Caco-2 (cell line): ENCODE measurements at regions of chr12 and their contacts with region 1.

Region 1: DNA sequence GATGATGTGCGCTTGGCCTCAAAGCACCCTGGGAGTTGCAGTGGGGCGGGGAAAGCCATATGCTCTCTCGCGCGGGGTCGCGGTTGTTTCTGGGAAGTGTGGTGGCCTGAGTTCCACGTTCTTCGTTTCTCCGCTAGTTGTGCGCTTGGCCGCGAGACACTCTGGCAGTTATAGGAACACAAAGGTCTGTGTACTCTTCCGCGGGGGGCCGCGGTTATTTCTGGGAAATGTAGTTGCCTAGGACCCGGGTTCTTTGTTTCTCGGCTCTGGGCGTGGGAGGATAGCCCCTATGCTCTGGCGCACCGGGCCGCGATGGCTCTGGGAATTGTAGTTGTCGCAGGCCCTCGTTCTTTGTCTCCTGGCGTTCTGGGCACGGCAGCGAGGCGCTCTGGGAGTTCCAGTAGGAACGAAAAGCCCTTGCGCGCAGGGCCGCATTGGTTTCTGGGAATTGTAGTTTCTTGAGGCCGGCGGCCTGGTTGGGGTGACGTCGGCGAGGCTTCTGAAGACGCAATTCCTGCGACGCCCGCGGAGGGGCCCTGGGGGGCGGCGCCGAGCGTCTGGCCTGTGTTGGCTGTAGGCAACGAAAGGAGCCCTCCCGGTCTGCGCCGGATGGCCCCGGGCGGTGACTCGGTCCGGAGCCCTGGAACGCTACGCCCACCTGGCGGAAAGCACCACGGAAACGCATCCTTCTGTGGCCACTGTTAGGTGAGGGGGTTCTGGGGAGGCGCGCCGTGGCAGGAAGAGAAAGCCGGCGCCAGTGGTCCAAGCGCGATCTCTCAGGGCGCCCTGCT is at the start of gene ZNF140:
- DNase-seq: peak; percentile 97
- H3K4me3 ChIP-seq: peak within 1 kb of the TSS; percentile 72
- H3K4me3 Mint-ChIP-seq: no peak within 1 kb of the TSS
- H3K27ac Mint-ChIP-seq: no peak within 1 kb of the TSS
- H3K4me1 ChIP-seq: no peaks in the 10 kb centered on the region
- H3K4me1 Mint-ChIP-seq: no peaks in the 10 kb centered on the region
- H3K27me3 ChIP-seq: no peaks in the 10 kb centered on the region
- H3K27me3 Mint-ChIP-seq: no peaks in the 10 kb centered on the region
- CTCF ChIP-seq: peak in 1 of 2 experiments; percentile 16
- total RNA-seq, gene ZNF140: 12.1 and 12.5 TPM in 2 replicates

Region 2: DNA sequence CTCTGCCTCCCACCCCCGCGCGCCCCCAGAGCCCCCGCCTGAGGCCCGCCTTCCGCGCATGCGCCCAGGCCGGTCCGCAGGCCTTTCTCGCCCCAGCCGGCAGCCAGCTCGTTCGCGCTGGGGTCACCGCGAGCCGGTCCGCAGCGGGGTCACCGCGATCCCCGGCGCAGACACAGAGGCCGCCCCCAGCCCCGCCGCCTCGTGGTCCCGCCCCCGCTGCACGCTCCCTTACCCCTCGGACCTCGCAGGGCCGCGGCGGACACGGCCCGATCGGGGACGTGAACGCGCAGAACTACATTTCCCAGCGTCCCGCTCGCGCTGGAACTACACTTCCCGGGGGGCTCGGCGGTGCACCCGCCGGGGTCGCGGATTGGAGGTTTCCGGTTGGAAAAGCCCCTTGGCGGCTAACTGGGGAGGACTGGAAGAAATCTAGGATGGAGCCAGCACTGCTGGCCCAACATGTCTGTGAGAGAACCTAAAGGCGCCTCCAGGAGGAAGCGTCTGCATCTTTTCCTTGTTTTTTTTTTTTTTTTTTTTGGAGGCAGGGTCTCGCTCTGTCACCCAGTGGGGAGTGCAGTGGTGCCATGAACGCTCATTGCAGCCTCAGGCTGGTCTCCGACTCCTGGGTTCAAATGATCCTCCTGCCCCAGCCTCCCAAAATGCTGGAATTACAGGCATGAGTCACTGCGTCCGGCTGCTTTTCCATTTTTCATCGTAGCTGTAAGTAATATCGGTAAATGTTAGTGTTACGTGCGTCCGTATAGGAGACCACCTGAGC is 124.4 kb before region 1 on chr12 and contains the start of gene ZNF605:
- CTCF ChIA-PET with region 1: no interaction called
- POLR2A ChIA-PET with region 1: interaction called, 6 read pairs
- intact Hi-C with region 1: loop called (anchors 2 kb)
- DNase-seq: peak; percentile 89 to 90
- H3K4me3 ChIP-seq: peak within 1 kb of the TSS; percentile 49
- H3K4me3 Mint-ChIP-seq: peak within 1 kb of the TSS; percentile 83
- H3K27ac Mint-ChIP-seq: peak within 1 kb of the TSS; percentile 83
- H3K4me1 ChIP-seq: no peaks in the 10 kb centered on the region
- H3K4me1 Mint-ChIP-seq: peaks cover 11% of the 10 kb centered on the region
- H3K27me3 ChIP-seq: no peaks in the 10 kb centered on the region
- H3K27me3 Mint-ChIP-seq: no peaks in the 10 kb centered on the region
- CTCF ChIP-seq: peak in 1 of 2 experiments; percentile 11
- total RNA-seq, gene ZNF605: 7.1 and 7.5 TPM in 2 replicates

Region 3: DNA sequence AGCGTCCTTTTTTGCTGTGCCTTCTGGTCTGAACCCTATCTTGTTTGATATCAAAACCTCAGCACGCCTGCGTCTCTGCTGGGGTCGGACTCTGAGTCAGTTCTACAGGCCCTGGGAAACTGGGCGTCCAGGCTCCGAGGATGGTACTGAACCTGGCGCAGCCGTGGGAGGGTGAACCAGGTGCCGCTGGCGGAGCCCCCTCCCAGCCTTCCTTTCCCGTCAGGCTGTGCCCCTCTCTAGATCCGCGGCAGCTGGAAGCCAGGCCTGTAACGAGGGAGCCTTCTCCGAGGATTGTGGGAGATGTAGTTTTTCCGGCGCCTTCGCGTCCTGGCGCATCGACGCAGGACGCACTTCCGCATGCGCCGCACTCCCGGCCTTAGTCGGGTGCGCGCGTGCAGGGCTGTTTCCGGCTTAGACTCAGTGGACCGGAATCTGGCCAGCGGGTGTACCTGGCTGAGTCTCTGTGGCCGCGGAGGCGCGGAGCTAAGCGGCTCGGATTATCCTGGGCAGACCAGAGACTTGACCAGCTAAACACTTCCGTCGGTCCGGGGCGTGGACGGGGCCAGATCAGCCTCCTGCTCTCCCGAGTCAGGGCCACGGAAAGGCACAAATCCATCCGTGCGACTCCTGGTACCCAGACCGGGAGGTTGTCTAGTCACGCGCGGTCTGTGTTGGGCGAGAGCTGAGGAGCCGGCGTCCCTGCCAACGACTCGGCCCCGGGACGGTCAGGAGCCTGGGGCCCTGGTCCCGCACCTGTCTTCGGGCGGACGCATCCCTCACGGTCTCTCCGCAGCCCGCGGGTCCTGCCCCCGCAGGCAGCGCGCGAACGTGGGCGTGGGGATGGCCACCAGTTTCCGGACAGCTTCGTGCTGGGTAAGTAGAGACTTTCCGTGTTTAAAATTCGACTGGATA is 94.3 kb before region 1 on chr12 and contains the start of gene ZNF26:
- CTCF ChIA-PET with region 1: no interaction called
- POLR2A ChIA-PET with region 1: interaction called, 5 read pairs
- intact Hi-C with region 1: loop called (anchors 1 kb)
- DNase-seq: peak; percentile 89 to 90
- H3K4me3 ChIP-seq: peak within 1 kb of the TSS; percentile 96
- H3K4me3 Mint-ChIP-seq: peak within 1 kb of the TSS; percentile 80
- H3K27ac Mint-ChIP-seq: peak within 1 kb of the TSS; percentile 69
- H3K4me1 ChIP-seq: no peaks in the 10 kb centered on the region
- H3K4me1 Mint-ChIP-seq: peaks cover 8% of the 10 kb centered on the region
- H3K27me3 ChIP-seq: no peaks in the 10 kb centered on the region
- H3K27me3 Mint-ChIP-seq: no peaks in the 10 kb centered on the region
- CTCF ChIP-seq: no peak
- total RNA-seq, gene ZNF26: 15.0 and 17.8 TPM in 2 replicates

Region 4: DNA sequence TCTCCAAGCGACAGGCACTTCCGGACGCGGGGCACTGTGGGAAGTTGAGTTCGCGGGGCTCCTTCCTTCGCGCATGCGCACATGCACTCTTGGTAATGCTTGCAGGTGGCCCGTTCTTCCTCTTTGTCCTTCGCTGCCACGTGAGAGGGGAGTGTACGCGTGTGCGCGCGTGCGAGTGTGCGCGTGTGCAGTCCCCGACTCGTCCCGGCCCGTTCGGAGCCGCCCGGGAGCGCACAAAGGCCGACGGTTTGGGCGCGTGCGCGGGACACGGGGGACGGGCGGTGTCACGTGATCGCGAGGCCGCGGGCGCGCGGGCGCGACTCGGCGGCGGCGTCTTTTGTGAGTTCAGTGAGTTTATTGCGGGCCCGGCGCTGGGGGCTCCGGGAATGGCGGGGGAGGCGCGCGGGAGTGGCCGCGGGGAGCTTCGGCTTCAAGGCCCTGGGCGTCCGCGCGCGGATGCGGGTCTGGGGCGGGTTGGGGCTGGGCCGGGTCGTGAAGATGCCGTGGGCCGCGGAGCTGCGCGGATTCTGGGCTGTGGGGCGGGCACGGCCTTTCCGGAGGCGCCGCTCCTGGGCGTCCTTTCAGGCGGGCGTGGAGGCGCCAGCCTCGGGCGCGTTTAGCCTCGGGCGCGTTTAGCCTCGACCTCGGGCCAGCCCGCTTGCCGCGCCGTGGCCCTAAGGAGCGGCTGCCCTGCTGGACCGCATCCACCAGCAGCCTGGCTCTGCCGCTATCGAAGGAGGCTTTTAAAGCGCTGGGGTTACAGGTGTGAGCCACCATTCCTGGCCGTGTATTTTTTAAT is 43.2 kb before region 1 on chr12 and contains the start of gene ZNF84:
- CTCF ChIA-PET with region 1: no interaction called
- POLR2A ChIA-PET with region 1: interaction called, 14 read pairs
- intact Hi-C with region 1: loop called (anchors 1 kb)
- DNase-seq: peak; percentile 96 to 97
- H3K4me3 ChIP-seq: peak within 1 kb of the TSS; percentile 92
- H3K4me3 Mint-ChIP-seq: peak within 1 kb of the TSS; percentile 90
- H3K27ac Mint-ChIP-seq: peak within 1 kb of the TSS; percentile 97
- H3K4me1 ChIP-seq: no peaks in the 10 kb centered on the region
- H3K4me1 Mint-ChIP-seq: no peaks in the 10 kb centered on the region
- H3K27me3 ChIP-seq: no peaks in the 10 kb centered on the region
- H3K27me3 Mint-ChIP-seq: no peaks in the 10 kb centered on the region
- CTCF ChIP-seq: no peak
- total RNA-seq, gene ZNF84: 21.8 and 24.9 TPM in 2 replicates

Region 5: GRCh38 chr12:133130038-133130807 is 49.7 kb after region 1 on chr12 and contains the starts of genes ZNF10 and ZNF891:
- CTCF ChIA-PET with region 1: no interaction called
- POLR2A ChIA-PET with region 1: interaction called, 6 read pairs
- intact Hi-C with region 1: loop called (anchors 1 kb)
- DNase-seq: peak; percentile 97 to 98
- H3K4me3 ChIP-seq: peak within 1 kb of the TSS; percentile 99
- H3K4me3 Mint-ChIP-seq: peak within 1 kb of the TSS; percentile 97
- H3K27ac Mint-ChIP-seq: peak within 1 kb of the TSS; percentile 98
- H3K4me1 ChIP-seq: no peaks in the 10 kb centered on the region; the same call in 1 of the 2 replicates
- H3K4me1 Mint-ChIP-seq: no peaks in the 10 kb centered on the region
- H3K27me3 ChIP-seq: no peaks in the 10 kb centered on the region
- H3K27me3 Mint-ChIP-seq: no peaks in the 10 kb centered on the region
- CTCF ChIP-seq: no peak
- total RNA-seq, gene ZNF10: 6.9 and 7.6 TPM in 2 replicates
- total RNA-seq, gene ZNF891: 2.0 and 2.3 TPM in 2 replicates

Region 6: DNA sequence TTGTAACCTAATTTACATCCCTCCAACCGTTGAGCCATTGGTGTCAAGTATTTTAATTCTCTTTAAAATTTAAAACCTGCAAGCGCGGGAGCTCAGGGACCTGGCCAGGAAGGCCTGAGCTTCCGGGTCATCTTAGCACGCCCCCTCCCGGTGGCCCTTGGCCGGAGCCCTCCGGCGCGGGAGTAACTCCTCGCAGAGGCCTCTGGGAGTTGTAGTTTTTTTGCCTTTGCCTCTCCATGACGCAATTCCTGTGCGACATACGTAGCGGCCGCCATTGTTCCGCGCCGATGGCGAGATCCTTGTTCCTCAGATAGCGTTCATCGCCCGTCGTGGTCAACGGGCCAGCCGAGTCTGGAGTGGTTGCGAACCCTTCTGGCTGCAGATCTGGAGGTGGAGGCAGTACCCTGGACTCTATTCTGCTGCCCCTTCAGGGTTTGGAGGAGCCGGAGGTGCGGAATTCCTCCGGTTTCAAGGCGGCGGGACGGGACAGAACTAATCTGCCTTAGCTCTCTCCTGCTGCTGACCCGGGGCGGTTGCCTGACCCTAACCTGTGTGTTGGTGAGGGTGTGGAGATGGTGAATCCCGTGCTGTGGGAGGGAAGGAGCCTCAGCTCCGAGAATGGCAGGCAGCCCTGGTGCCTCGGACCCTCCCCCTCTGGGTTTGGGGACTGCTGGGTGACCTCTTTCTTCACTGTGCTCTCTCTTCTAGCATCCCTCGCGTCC is 100.8 kb after region 1 on chr12 and contains the start of gene ZNF268:
- CTCF ChIA-PET with region 1: interaction called, 6 read pairs
- POLR2A ChIA-PET with region 1: interaction called, 7 read pairs
- intact Hi-C with region 1: loop called (anchors 1 kb)
- DNase-seq: peak; percentile 94 to 96
- H3K4me3 ChIP-seq: peak within 1 kb of the TSS; percentile 83
- H3K4me3 Mint-ChIP-seq: peak within 1 kb of the TSS; percentile 97
- H3K27ac Mint-ChIP-seq: peak within 1 kb of the TSS; percentile 99
- H3K4me1 ChIP-seq: peaks cover 7% of the 10 kb centered on the region
- H3K4me1 Mint-ChIP-seq: no peaks in the 10 kb centered on the region
- H3K27me3 ChIP-seq: no peaks in the 10 kb centered on the region
- H3K27me3 Mint-ChIP-seq: no peaks in the 10 kb centered on the region
- CTCF ChIP-seq: peak; percentile 79 to 94
- total RNA-seq, gene ZNF268: 24.1 and 32.0 TPM in 2 replicates